ENCODE measurements at regions of chr3 and their contacts with region 1.

Region 1: DNA sequence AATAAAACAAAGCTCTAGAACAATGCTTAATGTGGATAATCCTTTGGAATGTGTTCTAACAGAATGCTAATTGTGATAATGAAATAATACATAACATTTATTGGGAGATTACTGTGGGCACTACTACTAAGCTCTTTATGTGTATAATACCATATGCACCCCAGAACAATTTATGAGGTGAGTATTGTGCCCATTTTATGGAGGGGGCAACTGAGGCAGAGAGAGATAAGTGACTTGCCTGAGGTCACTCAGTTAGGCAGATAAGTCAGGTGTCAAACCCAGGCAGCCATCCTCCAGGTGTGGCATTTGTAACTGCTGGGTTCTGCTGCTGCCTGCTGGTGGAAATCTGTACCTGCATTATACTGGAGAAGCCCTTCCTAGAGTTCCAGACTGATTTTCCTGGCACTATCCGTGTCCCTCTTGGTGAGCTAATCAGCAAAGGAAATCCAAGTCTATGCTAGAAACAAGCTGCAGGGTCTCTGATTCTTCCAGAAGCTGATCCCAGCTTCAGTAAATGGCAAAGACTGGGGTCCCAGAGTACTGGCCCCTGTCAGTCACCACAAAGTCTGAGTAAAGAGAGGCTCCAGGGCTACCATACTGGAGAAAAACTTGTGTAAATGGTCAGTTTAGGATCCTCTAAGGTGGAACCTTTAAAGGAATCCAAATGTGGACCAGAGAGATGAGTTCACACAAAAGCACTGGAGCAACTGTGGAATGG is 22.6 kb upstream of the RBP1 start:
- DNase-seq: no peak
- H3K4me3 ChIP-seq: no peak overlapping the region
- H3K27ac ChIP-seq: no peak overlapping the region
- H3K4me1 ChIP-seq: peaks cover 3 to 28% (median 15%) of the 10 kb centered on the region in 3 donors
- H3K27me3 ChIP-seq: no peaks in the 10 kb centered on the region
- CTCF ChIP-seq: peak in 5 of 6 experiments; percentile 51 to 90 (median 72)
- POLR2A ChIP-seq: no peak

Region 2: DNA sequence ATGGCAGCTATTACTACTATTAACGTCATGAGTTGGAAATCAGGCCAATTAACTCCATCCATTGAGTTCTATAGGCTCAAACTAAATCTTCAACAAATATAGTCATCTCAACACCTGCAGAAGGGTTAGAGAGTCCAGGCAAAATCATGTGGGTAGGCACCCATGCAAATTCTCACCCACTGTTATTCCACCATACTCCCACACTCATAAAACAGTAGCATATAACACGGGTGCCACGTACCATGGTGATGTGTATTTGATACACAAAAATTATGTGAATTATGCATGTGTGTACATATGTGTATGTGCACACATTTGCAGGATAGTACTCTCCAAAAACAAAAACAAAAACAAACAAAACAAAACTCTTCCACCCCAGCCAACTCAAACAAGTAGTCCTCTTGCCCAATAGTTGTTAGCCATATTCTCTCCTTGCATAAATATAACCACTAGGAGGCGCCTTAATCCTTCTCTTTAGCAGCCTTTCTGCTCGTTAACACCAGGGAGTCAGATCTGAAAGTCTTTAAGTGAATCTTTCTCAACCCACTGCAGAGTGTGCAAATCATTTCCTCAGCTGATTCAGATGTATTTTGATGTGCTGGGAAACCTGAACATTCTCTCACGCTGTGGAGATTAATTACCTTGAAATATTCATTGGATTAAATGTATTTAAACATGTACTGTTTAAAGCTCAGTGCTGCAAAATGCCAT is 134.7 kb before region 1 on chr3:
- intact Hi-C with region 1: loop called (anchors 5 kb)
- DNase-seq: no peak
- H3K4me3 ChIP-seq: no peak overlapping the region
- H3K27ac ChIP-seq: no peak overlapping the region
- H3K4me1 ChIP-seq: no peaks in the 10 kb centered on the region
- H3K27me3 ChIP-seq: no peaks in the 10 kb centered on the region
- CTCF ChIP-seq: peak; percentile 45 to 92 (median 80)
- POLR2A ChIP-seq: no peak

Region 3: GRCh38 chr3:139689122-139689521 is 127.0 kb after region 1 on chr3:
- intact Hi-C with region 1: no loop called
- DNase-seq: no peak
- H3K4me3 ChIP-seq: no peak overlapping the region
- H3K27ac ChIP-seq: no peak overlapping the region
- H3K4me1 ChIP-seq: no peaks in the 10 kb centered on the region
- H3K27me3 ChIP-seq: peaks cover 0 to 36% (median 0%) of the 10 kb centered on the region in 4 donors
- CTCF ChIP-seq: no peak
- POLR2A ChIP-seq: no peak

Region 4: GRCh38 chr3:139745831-139746230 is 183.7 kb after region 1 on chr3:
- intact Hi-C with region 1: no loop called
- DNase-seq: no peak
- H3K4me3 ChIP-seq: no peak overlapping the region
- H3K27ac ChIP-seq: no peak overlapping the region
- H3K4me1 ChIP-seq: no peaks in the 10 kb centered on the region
- H3K27me3 ChIP-seq: no peaks in the 10 kb centered on the region
- CTCF ChIP-seq: no peak
- POLR2A ChIP-seq: no peak

Measured in esophagus squamous epithelium (tissue), 5 donors.